PC-3 (cell line): ENCODE measurements at regions of chr18 and their contacts with region 1.

Region 1: GRCh38 chr18:44917216-44918141 is 236.8 kb downstream of the SETBP1 start:
- DNase-seq: peak; percentile 4
- ATAC-seq: peak; percentile 45
- H3K4me3 ChIP-seq: no peak overlapping the region
- H3K27ac ChIP-seq: no peak overlapping the region
- H3K4me1 ChIP-seq: peaks cover 8% of the 10 kb centered on the region; the same call in 1 of the 2 replicates
- H3K27me3 ChIP-seq: no peaks in the 10 kb centered on the region
- CTCF ChIP-seq: no peak

Region 2: GRCh38 chr18:44958455-44958854 is 41.0 kb after region 1 on chr18:
- CTCF ChIA-PET with region 1: no interaction called
- POLR2A ChIA-PET with region 1: no interaction called
- intact Hi-C with region 1: loop called (anchors 1 kb)
- DNase-seq: peak; percentile 56
- ATAC-seq: peak; percentile 95
- H3K4me3 ChIP-seq: no peak overlapping the region
- H3K27ac ChIP-seq: peak overlapping the region; percentile 59
- H3K4me1 ChIP-seq: peaks cover 15% of the 10 kb centered on the region
- H3K27me3 ChIP-seq: no peaks in the 10 kb centered on the region
- CTCF ChIP-seq: no peak

Region 3: DNA sequence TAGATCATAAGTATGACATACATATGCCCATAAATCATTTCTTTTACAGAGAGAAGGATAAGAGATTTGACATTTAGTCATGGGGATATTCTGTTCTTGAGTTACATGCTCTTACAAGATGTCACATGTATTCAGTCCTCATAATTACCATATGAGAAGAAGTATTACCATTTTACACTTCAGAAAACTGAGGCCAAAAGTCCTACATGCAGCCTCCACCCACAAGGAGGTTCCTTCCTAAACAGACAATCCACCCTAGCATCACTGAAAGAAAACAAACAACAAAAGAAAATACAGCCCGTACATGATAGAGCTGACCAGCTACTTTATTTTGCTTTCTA is 98.3 kb after region 1 on chr18:
- CTCF ChIA-PET with region 1: no interaction called
- POLR2A ChIA-PET with region 1: no interaction called
- intact Hi-C with region 1: loop called (anchors 5 kb)
- DNase-seq: no peak
- ATAC-seq: no peak
- H3K4me3 ChIP-seq: peak overlapping the region; percentile 49; the same call in 1 of the 2 replicates
- H3K27ac ChIP-seq: no peak overlapping the region
- H3K4me1 ChIP-seq: peaks cover 19% of the 10 kb centered on the region
- H3K27me3 ChIP-seq: no peaks in the 10 kb centered on the region
- CTCF ChIP-seq: no peak

Region 4: GRCh38 chr18:45059695-45060094 is 142.2 kb after region 1 on chr18:
- CTCF ChIA-PET with region 1: no interaction called
- POLR2A ChIA-PET with region 1: no interaction called
- intact Hi-C with region 1: loop called (anchors 10 kb)
- DNase-seq: peak; percentile 71
- ATAC-seq: peak; percentile 100
- H3K4me3 ChIP-seq: no peak overlapping the region
- H3K27ac ChIP-seq: peak overlapping the region; percentile 70
- H3K4me1 ChIP-seq: peaks cover 14% of the 10 kb centered on the region
- H3K27me3 ChIP-seq: no peaks in the 10 kb centered on the region
- CTCF ChIP-seq: no peak